Calu3 (cell line): ENCODE measurements at regions of chr6 and their contacts with region 1.

Region 1: GRCh38 chr6:52497652-52498408 is 77.7 kb downstream of the EFHC1 start:
- DNase-seq: no peak
- H3K4me3 Mint-ChIP-seq: no peak overlapping the region
- H3K27ac Mint-ChIP-seq: no peak overlapping the region
- H3K4me1 Mint-ChIP-seq: peaks cover 7% of the 10 kb centered on the region
- H3K27me3 Mint-ChIP-seq: no peaks in the 10 kb centered on the region
- CTCF ChIP-seq: no peak

Region 2: GRCh38 chr6:52454556-52454955 is 43.3 kb before region 1 on chr6:
- CTCF ChIA-PET with region 1: no interaction called
- intact Hi-C with region 1: loop called (anchors 1 kb)
- DNase-seq: peak; percentile 51
- H3K4me3 Mint-ChIP-seq: no peak overlapping the region
- H3K27ac Mint-ChIP-seq: peak overlapping the region; percentile 67
- H3K4me1 Mint-ChIP-seq: peaks cover 29% of the 10 kb centered on the region
- H3K27me3 Mint-ChIP-seq: no peaks in the 10 kb centered on the region
- CTCF ChIP-seq: no peak

Region 3: DNA sequence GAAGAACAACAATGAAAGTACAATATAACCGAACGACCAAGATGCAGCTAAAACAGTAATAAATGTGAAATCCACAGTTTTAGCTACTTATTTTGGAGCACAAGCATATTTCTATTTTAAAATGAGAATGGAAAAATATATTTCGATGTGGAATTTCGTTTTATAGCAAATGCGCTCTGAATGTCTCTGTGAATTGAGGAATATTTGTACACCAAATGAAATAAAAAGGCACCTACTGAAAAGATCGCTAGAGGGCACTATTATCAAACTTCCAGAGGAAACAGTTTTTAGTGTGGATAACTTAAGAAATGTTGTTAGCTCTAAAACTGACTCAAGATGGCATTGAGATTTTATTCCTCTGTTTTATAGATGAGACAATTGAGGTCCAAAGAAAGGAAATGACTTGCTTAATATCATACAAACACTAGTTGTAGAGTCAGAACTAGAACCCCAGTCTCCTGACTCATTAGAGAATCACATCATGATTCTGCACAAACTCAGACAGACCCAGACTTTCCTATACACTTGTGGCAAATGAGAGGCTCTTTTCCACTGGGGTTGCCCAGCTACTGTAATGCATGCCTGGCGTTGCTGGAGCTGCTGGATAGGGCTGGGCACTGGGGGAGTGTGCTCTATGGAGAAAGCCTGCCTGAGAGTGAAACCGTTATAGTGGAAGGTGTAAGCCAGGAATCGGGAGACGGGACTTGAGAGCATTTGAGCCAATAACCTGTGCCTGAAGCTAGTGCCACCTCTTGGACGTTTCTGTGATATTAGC is 995.2 kb after region 1 on chr6:
- CTCF ChIA-PET with region 1: no interaction called
- intact Hi-C with region 1: no loop called
- DNase-seq: no peak
- H3K4me3 Mint-ChIP-seq: peak overlapping the region; percentile 30
- H3K27ac Mint-ChIP-seq: no peak overlapping the region
- H3K4me1 Mint-ChIP-seq: peaks cover 19% of the 10 kb centered on the region
- H3K27me3 Mint-ChIP-seq: no peaks in the 10 kb centered on the region
- CTCF ChIP-seq: peak; percentile 22